A549 (cell line): ENCODE measurements at regions of chr2 and their contacts with region 1.

Region 1: DNA sequence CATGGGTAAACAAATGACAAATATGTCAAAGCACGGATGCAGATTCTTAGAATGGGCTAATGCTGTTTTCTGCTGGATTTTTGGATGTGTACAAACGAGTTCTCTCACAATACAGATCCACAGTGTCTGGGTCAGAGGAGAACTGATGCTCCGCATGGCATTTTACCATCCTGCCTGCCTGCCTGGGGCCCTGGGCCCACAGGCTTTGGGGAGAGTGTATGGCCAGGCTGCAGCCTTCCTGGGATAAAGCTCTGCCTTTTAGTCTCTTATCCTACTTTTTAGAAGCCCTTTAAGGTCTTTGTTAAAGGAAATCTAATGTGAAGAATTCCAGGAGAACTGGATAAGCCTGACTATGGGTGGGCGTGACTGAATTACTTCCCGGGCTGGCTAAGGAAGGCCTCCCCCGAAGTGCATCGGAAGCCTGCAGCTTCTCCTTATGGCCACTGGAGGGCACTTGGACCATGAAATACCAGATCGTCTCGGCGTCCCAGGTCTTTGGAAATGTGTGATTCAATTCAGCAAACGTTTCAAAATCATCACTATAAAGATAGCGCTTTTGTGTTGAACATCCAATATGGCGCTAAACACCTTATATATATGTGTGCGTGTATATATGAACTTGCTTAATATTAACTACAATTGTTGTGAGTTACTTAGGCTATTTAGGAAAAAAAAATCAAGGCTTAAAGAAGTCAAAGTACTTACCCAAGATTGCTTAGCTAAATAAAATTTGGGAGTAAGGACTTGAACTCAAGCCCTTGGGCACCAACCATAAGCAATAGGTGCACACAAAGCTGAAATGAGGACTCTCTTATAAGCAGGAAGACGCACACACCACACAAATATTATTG is 15.2 kb upstream of the DNPEP start:
- DNase-seq: peak; percentile 62 to 84
- ATAC-seq: peak; percentile 52 to 80; a peak in 5 of 6 replicates
- H3K4me3 ChIP-seq: no peak overlapping the region
- H3K27ac ChIP-seq: no peak overlapping the region
- H3K4me1 ChIP-seq: peaks cover 39% of the 10 kb centered on the region
- CTCF ChIP-seq: peak; percentile 87
- EP300 ChIP-seq: no peak
- POLR2A ChIP-seq: no peak
- RAD21 ChIP-seq: peak; percentile 85 to 90

Region 2: GRCh38 chr2:219142329-219142728 is 260.6 kb before region 1 on chr2:
- CTCF ChIA-PET with region 1: no interaction called
- POLR2A ChIA-PET with region 1: no interaction called
- DNase-seq: no peak
- ATAC-seq: peak; percentile 68 to 70; a peak in 4 of 6 replicates
- H3K4me3 ChIP-seq: no peak overlapping the region
- H3K27ac ChIP-seq: no peak overlapping the region
- H3K4me1 ChIP-seq: peaks cover 5% of the 10 kb centered on the region; the same call in 1 of the 3 replicates
- CTCF ChIP-seq: no peak
- EP300 ChIP-seq: no peak
- POLR2A ChIP-seq: no peak
- RAD21 ChIP-seq: no peak

Region 3: DNA sequence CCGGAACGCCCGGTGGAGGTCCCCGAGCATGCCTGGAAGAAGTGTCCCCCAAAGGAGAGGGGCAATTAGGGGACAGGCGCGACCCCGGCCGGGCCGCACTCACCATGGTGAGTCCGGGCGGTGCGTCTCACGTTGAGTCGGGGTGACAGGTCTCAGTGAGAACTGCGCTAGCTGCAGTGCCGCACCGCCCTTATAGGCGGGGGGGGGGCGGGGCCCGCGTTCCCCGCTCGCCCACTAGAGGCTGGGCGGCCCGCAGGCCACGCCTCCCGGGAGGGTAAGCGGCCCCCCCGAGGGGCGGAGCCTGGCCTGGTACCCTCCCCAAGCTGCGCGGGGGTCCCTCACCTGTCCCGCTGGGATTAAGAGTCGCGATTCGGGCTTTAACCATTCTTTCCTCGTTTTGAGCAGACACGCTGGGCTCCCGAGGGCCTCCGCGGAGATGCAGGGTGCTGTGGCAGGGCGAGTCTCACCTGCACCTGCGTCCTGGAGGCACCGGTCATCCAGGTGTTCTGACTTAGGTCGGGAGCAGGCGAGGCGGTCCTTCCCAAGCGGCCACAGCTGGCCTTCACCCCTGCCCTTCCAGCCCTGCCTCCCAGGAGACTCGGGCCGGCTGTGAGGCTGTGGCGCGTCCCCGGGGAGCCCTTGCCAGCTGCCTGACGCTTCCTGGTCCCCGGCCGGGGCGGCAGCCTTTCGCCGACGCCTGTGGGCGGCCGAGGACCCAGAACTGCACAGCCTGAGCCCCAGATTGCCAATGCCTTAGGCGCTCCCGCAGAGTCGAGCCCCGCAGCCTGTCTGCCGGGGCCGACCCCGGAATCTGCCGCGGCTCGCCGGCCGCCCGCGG is 148.9 kb before region 1 on chr2 and contains the start of gene TUBA4A:
- CTCF ChIA-PET with region 1: no interaction called
- POLR2A ChIA-PET with region 1: no interaction called
- DNase-seq: peak; percentile 81 to 83
- ATAC-seq: peak; percentile 62 to 82
- H3K4me3 ChIP-seq: peak within 1 kb of the TSS; percentile 71
- H3K27ac ChIP-seq: peak within 1 kb of the TSS; percentile 90
- H3K4me1 ChIP-seq: peaks cover 37% of the 10 kb centered on the region
- CTCF ChIP-seq: no peak
- EP300 ChIP-seq: no peak
- POLR2A ChIP-seq: peak; percentile 99
- RAD21 ChIP-seq: no peak
- polyA plus RNA-seq, gene TUBA4A: 222 and 251 TPM in 2 replicates

Region 4: GRCh38 chr2:219308142-219309093 is 94.5 kb before region 1 on chr2:
- CTCF ChIA-PET with region 1: no interaction called
- POLR2A ChIA-PET with region 1: no interaction called
- DNase-seq: peak; percentile 68 to 70
- ATAC-seq: peak; percentile 94 to 95
- H3K4me3 ChIP-seq: peak overlapping the region; percentile 36
- H3K27ac ChIP-seq: peak overlapping the region in 1 of 2 experiments; percentile 38; a peak in 3 of 6 replicates
- H3K4me1 ChIP-seq: peaks cover 13% of the 10 kb centered on the region; the same call in 2 of the 3 replicates
- CTCF ChIP-seq: no peak
- EP300 ChIP-seq: no peak
- POLR2A ChIP-seq: no peak
- RAD21 ChIP-seq: no peak

Region 5: DNA sequence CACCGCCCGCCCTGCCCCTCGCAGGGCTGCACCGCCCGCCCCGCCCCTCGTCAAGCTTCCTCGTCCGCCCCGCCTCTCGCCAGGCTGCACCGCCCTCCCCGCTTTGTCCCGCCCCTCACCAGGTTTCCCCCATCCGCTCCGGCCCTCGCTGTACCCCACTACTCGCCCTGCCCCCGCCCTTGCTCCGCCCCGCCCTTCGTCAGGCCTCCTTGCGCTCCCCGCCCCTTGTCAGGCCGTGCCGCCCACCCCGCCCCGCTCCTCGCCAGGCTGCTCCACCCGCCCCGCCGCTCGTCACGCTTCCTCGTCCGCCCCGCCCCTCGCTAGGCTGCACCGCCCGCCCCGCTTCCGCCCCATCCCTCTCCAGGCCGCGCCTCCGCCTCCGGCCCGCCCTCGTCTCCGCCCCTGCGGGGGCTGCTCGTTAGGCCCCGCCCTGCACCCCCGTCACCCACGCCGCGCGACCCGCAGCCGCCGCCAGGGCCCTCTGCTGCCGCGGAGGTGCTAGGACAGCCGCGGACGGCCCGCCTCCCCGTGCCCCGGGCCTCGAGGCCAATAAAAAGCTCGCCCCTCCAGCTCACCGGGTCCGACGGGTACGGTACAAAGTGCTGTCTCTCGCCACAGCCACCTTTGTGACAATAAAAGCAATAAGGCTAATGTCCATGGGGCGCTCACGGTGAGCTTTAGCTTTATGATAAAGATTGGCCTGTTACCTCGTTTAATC is 14.6 kb before region 1 on chr2:
- CTCF ChIA-PET with region 1: interaction called, 90 read pairs
- POLR2A ChIA-PET with region 1: interaction called, 7 read pairs
- DNase-seq: peak; percentile 76 to 96
- ATAC-seq: peak; percentile 77 to 82
- H3K4me3 ChIP-seq: peak overlapping the region; percentile 99
- H3K27ac ChIP-seq: peak overlapping the region; percentile 75 to 96
- H3K4me1 ChIP-seq: peaks cover 9% of the 10 kb centered on the region
- CTCF ChIP-seq: peak; percentile 39; the same call in 2 of the 3 replicates
- EP300 ChIP-seq: no peak
- POLR2A ChIP-seq: no peak
- RAD21 ChIP-seq: peak in 1 of 2 experiments; percentile 38; a peak in 1 of 5 replicates

Region 6: GRCh38 chr2:219441451-219442255 is 38.8 kb after region 1 on chr2:
- CTCF ChIA-PET with region 1: interaction called, 24 read pairs
- POLR2A ChIA-PET with region 1: no interaction called
- DNase-seq: peak; percentile 46 to 64
- ATAC-seq: peak; percentile 47 to 66; a peak in 5 of 6 replicates
- H3K4me3 ChIP-seq: peak overlapping the region; percentile 90
- H3K27ac ChIP-seq: peak overlapping the region; percentile 81 to 91
- H3K4me1 ChIP-seq: peaks cover 20% of the 10 kb centered on the region
- CTCF ChIP-seq: no peak
- EP300 ChIP-seq: no peak
- POLR2A ChIP-seq: no peak
- RAD21 ChIP-seq: no peak

Region 7: GRCh38 chr2:219466816-219467748 is 64.2 kb after region 1 on chr2:
- CTCF ChIA-PET with region 1: interaction called, 17 read pairs
- POLR2A ChIA-PET with region 1: no interaction called
- DNase-seq: no peak
- ATAC-seq: no peak
- H3K4me3 ChIP-seq: no peak overlapping the region
- H3K27ac ChIP-seq: no peak overlapping the region
- H3K4me1 ChIP-seq: peaks cover 12% of the 10 kb centered on the region
- CTCF ChIP-seq: no peak
- EP300 ChIP-seq: no peak
- POLR2A ChIP-seq: no peak
- RAD21 ChIP-seq: no peak

Region 8: DNA sequence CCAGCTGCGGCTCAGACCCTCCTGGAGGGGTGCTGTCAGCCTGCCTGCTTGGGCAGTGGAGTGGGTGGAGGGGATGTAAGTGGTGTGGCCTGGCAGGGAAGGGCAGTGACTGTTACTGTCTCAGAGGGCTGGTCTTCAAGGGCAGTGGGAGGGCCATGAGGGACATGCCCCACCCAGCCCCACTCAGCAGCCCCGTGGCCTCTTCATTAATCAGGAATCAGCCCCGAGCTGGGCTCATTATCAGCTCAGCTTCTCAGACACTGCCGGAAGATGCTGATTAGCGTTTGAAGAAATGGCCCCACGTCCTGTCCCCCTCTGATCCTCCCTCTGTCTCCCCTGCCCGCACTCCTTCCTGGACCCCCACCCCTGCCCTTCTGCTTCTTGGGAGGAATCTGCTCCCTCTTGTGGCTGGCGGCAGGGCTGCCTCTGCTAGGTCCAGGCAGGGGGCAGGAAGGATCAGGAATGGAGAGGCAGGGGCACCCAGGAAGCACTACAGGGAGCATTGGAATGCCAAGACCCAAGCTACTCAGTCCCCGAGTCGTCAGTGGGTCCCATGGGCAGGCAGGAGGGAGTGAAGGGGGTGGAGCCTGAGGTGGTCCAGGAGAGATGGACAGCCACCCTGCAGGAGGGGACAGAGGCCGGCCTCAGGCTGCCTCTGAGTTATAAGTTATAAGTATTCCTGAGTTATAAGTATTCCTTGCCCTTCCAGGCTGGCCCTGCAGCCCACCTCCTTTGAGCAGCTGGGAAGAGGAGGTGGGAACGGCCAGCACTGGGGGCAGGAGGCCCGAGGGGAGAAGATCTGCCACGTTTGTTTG is 118.4 kb after region 1 on chr2:
- CTCF ChIA-PET with region 1: interaction called, 362 read pairs
- POLR2A ChIA-PET with region 1: no interaction called
- DNase-seq: peak; percentile 60 to 87
- ATAC-seq: peak; percentile 76 to 94
- H3K4me3 ChIP-seq: 0 out of 3 replicates have a peak overlapping the region, but pooled peaks have one; percentile 9
- H3K27ac ChIP-seq: peak overlapping the region; percentile 15 to 80; a peak in 4 of 6 replicates
- H3K4me1 ChIP-seq: peaks cover 17% of the 10 kb centered on the region
- CTCF ChIP-seq: peak; percentile 70
- EP300 ChIP-seq: no peak
- POLR2A ChIP-seq: no peak
- RAD21 ChIP-seq: peak; percentile 57 to 60

Region 9: GRCh38 chr2:219543601-219544358 is 140.9 kb after region 1 on chr2 and contains the starts of genes CHPF and TMEM198:
- CTCF ChIA-PET with region 1: interaction called, 22 read pairs
- POLR2A ChIA-PET with region 1: no interaction called
- DNase-seq: peak; percentile 87 to 96
- ATAC-seq: peak; percentile 66 to 78
- H3K4me3 ChIP-seq: peak within 1 kb of the TSS; percentile 61
- H3K27ac ChIP-seq: peak within 1 kb of the TSS; percentile 58 to 89
- H3K4me1 ChIP-seq: peaks cover 12% of the 10 kb centered on the region
- CTCF ChIP-seq: no peak
- EP300 ChIP-seq: no peak
- POLR2A ChIP-seq: no peak; the same call in 1 of the 2 replicates
- RAD21 ChIP-seq: no peak
- polyA plus RNA-seq, gene CHPF: 9.0 and 10.2 TPM in 2 replicates
- polyA plus RNA-seq, gene TMEM198: 0.31 and 0.33 TPM in 2 replicates